H1 (cell line): ENCODE measurements at regions of chr16 and their contacts with region 1.

Region 1: DNA sequence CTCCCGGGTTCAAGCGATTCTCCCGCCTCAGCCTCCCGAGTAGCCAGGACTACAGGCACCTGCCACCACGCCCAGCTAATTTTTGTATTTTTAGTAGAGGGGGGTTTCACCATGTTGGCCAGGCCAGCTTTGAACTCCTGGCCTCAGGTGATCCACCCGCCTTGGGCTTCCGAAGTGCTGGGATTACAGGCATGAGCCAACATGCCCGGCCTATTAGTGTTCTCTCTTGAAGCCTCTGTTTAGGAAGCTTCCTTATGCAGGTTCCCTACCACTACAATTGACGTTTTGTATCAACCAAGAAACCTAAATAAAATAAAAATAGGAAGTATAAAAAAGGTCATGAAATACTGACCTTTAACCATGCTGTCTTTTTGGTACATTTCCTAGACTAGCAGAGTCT is 16.0 kb downstream of the CHST5 start:
- DNase-seq: no peak
- H3K4me3 ChIP-seq: no peak overlapping the region
- H3K27ac ChIP-seq: no peak overlapping the region
- H3K4me1 ChIP-seq: peaks cover 0 to 6% (median 2%) of the 10 kb centered on the region in 4 experiments; a peak in 3 of 7 replicates
- H3K27me3 ChIP-seq: no peaks in the 10 kb centered on the region
- CTCF ChIP-seq: no peak
- EP300 ChIP-seq: no peak
- POLR2A ChIP-seq: no peak
- RAD21 ChIP-seq: no peak

Region 2: GRCh38 chr16:75432828-75433731 is 86.8 kb before region 1 on chr16 and contains the start of gene CFDP1:
- CTCF ChIA-PET with region 1: interaction called, 5 read pairs
- POLR2A ChIA-PET with region 1: interaction called, 18 read pairs
- DNase-seq: peak; percentile 89 to 97
- H3K4me3 ChIP-seq: peak within 1 kb of the TSS; percentile 74 to 95 (median 83)
- H3K27ac ChIP-seq: peak within 1 kb of the TSS; percentile 93
- H3K4me1 ChIP-seq: peaks cover 0 to 7% (median 3%) of the 10 kb centered on the region in 4 experiments; a peak in 4 of 7 replicates
- H3K27me3 ChIP-seq: no peaks in the 10 kb centered on the region
- CTCF ChIP-seq: no peak
- EP300 ChIP-seq: 0 out of 3 replicates have a peak, but pooled peaks of 1 of the 2 experiments have one; percentile 55
- POLR2A ChIP-seq: peak in 1 of 2 experiments; percentile 71; a peak in 1 of 3 replicates
- RAD21 ChIP-seq: no peak
- total RNA-seq, gene CFDP1: 76.9 and 77.3 TPM in 2 replicates

Region 3: DNA sequence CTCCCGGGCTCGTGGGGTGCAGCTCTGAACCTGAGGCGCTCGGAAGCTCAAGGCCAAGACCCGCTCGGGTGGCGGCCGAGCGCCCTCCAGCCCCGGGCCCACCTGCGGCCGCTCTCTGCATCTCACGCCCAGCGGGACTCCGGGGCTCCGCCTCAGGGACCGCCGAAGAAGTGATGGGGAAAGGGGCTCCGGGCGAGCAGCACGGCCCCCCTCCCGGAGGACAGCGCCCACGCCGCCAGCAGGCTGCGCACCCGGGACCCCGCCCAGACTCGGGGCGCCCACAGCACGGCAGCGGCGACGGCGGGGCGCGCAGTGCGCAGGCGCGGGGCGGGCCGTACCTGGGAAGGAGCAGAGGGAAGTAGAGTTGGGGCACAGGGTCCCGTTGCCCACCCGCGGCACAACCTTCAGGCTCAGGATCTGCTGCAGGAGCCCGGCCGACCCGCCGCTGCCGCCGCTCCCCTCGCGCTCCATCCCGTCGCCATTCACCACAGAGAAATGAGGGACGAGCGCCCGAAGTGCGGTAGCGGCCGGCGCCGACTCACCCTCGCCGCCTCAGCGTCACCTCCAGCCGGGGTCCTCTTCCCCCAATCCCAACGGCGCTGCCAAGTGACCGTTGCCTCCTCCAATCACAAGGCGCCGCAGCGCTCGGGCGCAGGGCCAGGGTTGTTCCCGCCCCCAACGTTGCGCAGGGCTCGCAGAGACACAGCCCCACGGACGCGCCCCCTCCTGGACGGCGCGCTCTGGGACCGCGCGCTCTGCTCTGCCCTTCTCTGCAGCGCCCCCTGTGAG is 55.6 kb before region 1 on chr16 and contains the start of gene TMEM170A:
- CTCF ChIA-PET with region 1: interaction called, 181 read pairs
- POLR2A ChIA-PET with region 1: interaction called, 9 read pairs
- DNase-seq: peak; percentile 94 to 99
- H3K4me3 ChIP-seq: peak within 1 kb of the TSS; percentile 55 to 91 (median 88)
- H3K27ac ChIP-seq: peak within 1 kb of the TSS; percentile 92
- H3K4me1 ChIP-seq: peaks cover 0 to 2% (median 2%) of the 10 kb centered on the region in 4 experiments; a peak in 1 of 7 replicates
- H3K27me3 ChIP-seq: no peaks in the 10 kb centered on the region
- CTCF ChIP-seq: peak; percentile 98 to 100 (median 99)
- EP300 ChIP-seq: peak in 1 of 2 experiments; percentile 15; a peak in 1 of 3 replicates
- POLR2A ChIP-seq: peak; percentile 79 to 98
- RAD21 ChIP-seq: peak; percentile 58 to 76
- total RNA-seq, gene TMEM170A: 52.8 and 56.6 TPM in 2 replicates

Region 4: GRCh38 chr16:75486676-75487313 is 33.1 kb before region 1 on chr16:
- CTCF ChIA-PET with region 1: interaction called, 28 read pairs
- POLR2A ChIA-PET with region 1: interaction called, 6 read pairs
- DNase-seq: no peak
- H3K4me3 ChIP-seq: no peak overlapping the region
- H3K27ac ChIP-seq: no peak overlapping the region
- H3K4me1 ChIP-seq: no peaks in the 10 kb centered on the region
- H3K27me3 ChIP-seq: no peaks in the 10 kb centered on the region
- CTCF ChIP-seq: no peak
- EP300 ChIP-seq: no peak
- POLR2A ChIP-seq: no peak
- RAD21 ChIP-seq: no peak

Region 5: DNA sequence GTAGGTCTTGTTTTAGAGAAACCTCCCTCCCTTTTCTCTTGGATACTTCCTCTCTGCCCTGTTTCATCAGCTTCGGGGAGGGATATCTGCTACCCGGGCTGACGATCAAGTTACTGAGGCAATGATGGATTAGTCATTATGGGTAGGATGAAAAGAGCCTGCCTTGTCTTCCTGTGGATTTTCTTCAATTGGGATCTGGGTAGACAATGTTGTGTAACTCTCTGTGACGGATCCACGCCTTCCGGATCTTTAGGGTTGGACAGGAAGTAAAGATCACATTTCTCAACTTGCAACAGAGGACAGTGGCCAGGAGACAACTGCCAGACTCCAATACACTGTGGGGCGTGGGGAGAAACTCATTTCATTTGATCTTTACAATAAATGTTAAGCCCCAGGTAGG is 13.3 kb before region 1 on chr16:
- CTCF ChIA-PET with region 1: interaction called, 39 read pairs
- POLR2A ChIA-PET with region 1: interaction called, 4 read pairs
- DNase-seq: no peak
- H3K4me3 ChIP-seq: no peak overlapping the region
- H3K27ac ChIP-seq: no peak overlapping the region
- H3K4me1 ChIP-seq: no peaks in the 10 kb centered on the region
- H3K27me3 ChIP-seq: no peaks in the 10 kb centered on the region; a peak in 1 of 7 replicates
- CTCF ChIP-seq: no peak
- EP300 ChIP-seq: no peak
- POLR2A ChIP-seq: no peak
- RAD21 ChIP-seq: no peak

Region 6: GRCh38 chr16:75541236-75541635 is 21.4 kb after region 1 on chr16:
- CTCF ChIA-PET with region 1: interaction called, 203 read pairs
- POLR2A ChIA-PET with region 1: interaction called, 17 read pairs
- DNase-seq: no peak
- H3K4me3 ChIP-seq: no peak overlapping the region
- H3K27ac ChIP-seq: no peak overlapping the region
- H3K4me1 ChIP-seq: no peaks in the 10 kb centered on the region
- H3K27me3 ChIP-seq: no peaks in the 10 kb centered on the region
- CTCF ChIP-seq: no peak
- EP300 ChIP-seq: no peak
- POLR2A ChIP-seq: no peak
- RAD21 ChIP-seq: no peak

Region 7: GRCh38 chr16:75566040-75566810 is 46.3 kb after region 1 on chr16 and contains the start of gene GABARAPL2:
- CTCF ChIA-PET with region 1: interaction called, 96 read pairs
- POLR2A ChIA-PET with region 1: interaction called, 12 read pairs
- DNase-seq: peak; percentile 63 to 98
- H3K4me3 ChIP-seq: peak within 1 kb of the TSS; percentile 80 to 94 (median 88)
- H3K27ac ChIP-seq: no peak within 1 kb of the TSS
- H3K4me1 ChIP-seq: peaks cover 1 to 8% (median 3%) of the 10 kb centered on the region in 4 experiments; a peak in 5 of 7 replicates
- H3K27me3 ChIP-seq: no peaks in the 10 kb centered on the region
- CTCF ChIP-seq: no peak
- EP300 ChIP-seq: no peak
- POLR2A ChIP-seq: peak in 1 of 2 experiments; percentile 51; a peak in 1 of 3 replicates
- RAD21 ChIP-seq: peak in 1 of 2 experiments; percentile 0; a peak in 1 of 4 replicates
- total RNA-seq, gene GABARAPL2: 67.4 and 71.3 TPM in 2 replicates